Calu3 (cell line): ENCODE measurements at regions of chr4 and their contacts with region 1.

Region 1: GRCh38 chr4:175891851-175892250 is 79.8 kb upstream of the GPM6A start:
- DNase-seq: no peak
- H3K4me3 Mint-ChIP-seq: no peak overlapping the region
- H3K27ac Mint-ChIP-seq: no peak overlapping the region
- H3K4me1 Mint-ChIP-seq: no peaks in the 10 kb centered on the region
- H3K27me3 Mint-ChIP-seq: no peaks in the 10 kb centered on the region
- CTCF ChIP-seq: no peak

Region 2: GRCh38 chr4:175560604-175561003 is 331.2 kb before region 1 on chr4:
- CTCF ChIA-PET with region 1: no interaction called
- intact Hi-C with region 1: loop called (anchors 1 kb)
- DNase-seq: no peak
- H3K4me3 Mint-ChIP-seq: no peak overlapping the region
- H3K27ac Mint-ChIP-seq: no peak overlapping the region
- H3K4me1 Mint-ChIP-seq: peaks cover 16% of the 10 kb centered on the region
- H3K27me3 Mint-ChIP-seq: no peaks in the 10 kb centered on the region
- CTCF ChIP-seq: no peak

Region 3: DNA sequence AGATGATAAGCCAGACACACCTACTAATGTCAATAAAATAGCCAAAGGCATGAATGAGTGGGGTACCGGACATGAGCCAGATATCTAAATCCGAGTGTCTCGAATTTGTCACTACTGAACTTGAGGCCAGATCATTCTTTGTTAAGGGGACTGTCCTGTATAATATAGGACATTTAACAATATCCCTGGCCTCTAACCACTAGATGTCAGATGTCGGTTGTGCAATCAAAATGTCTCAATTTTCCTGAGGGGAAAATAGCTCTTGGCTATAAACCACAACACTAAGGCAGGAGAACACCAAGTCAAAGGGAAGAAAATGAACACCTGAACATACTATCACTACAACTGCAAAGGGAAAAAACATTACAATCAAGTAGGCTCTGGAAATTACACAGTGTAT is 234.3 kb before region 1 on chr4:
- CTCF ChIA-PET with region 1: no interaction called
- intact Hi-C with region 1: loop called (anchors 1 kb)
- DNase-seq: no peak
- H3K4me3 Mint-ChIP-seq: no peak overlapping the region
- H3K27ac Mint-ChIP-seq: no peak overlapping the region
- H3K4me1 Mint-ChIP-seq: no peaks in the 10 kb centered on the region
- H3K27me3 Mint-ChIP-seq: no peaks in the 10 kb centered on the region
- CTCF ChIP-seq: no peak

Region 4: GRCh38 chr4:175784986-175785525 is 106.8 kb before region 1 on chr4:
- CTCF ChIA-PET with region 1: no interaction called
- intact Hi-C with region 1: no loop called
- DNase-seq: no peak
- H3K4me3 Mint-ChIP-seq: no peak overlapping the region
- H3K27ac Mint-ChIP-seq: no peak overlapping the region
- H3K4me1 Mint-ChIP-seq: no peaks in the 10 kb centered on the region
- H3K27me3 Mint-ChIP-seq: no peaks in the 10 kb centered on the region
- CTCF ChIP-seq: no peak

Region 5: GRCh38 chr4:175927121-175927520 is 35.3 kb after region 1 on chr4:
- CTCF ChIA-PET with region 1: no interaction called
- intact Hi-C with region 1: no loop called
- DNase-seq: no peak
- H3K4me3 Mint-ChIP-seq: no peak overlapping the region
- H3K27ac Mint-ChIP-seq: no peak overlapping the region
- H3K4me1 Mint-ChIP-seq: no peaks in the 10 kb centered on the region
- H3K27me3 Mint-ChIP-seq: no peaks in the 10 kb centered on the region
- CTCF ChIP-seq: no peak